ENCODE measurements at regions of chr11 and their contacts with region 1.

Region 1: GRCh38 chr11:56841210-56841810 is 92.8 kb upstream of the OR9G4 start:
- ATAC-seq: peak; percentile 40 to 73 (median 60)
- H3K4me3 ChIP-seq: no peak overlapping the region
- H3K27ac ChIP-seq: no peak overlapping the region
- H3K4me1 ChIP-seq: peaks cover 0 to under 1% of the 10 kb centered on the region in 2 donors

Region 2: GRCh38 chr11:56706486-56706885 is 134.8 kb before region 1 on chr11:
- in situ Hi-C with region 1: no loop called
- ATAC-seq: peak in 1 of 8 experiments; percentile 46
- H3K4me3 ChIP-seq: no peak overlapping the region
- H3K27ac ChIP-seq: no peak overlapping the region
- H3K4me1 ChIP-seq: no peaks in the 10 kb centered on the region

Region 3: GRCh38 chr11:57116654-57117053 is 275.3 kb after region 1 on chr11:
- in situ Hi-C with region 1: loop called in 2 of 9 experiments (anchors 25 kb)
- ATAC-seq: peak in 3 of 8 experiments; percentile 82 to 90 (median 83)
- H3K4me3 ChIP-seq: no peak overlapping the region
- H3K27ac ChIP-seq: no peak overlapping the region
- H3K4me1 ChIP-seq: no peaks in the 10 kb centered on the region

Region 4: DNA sequence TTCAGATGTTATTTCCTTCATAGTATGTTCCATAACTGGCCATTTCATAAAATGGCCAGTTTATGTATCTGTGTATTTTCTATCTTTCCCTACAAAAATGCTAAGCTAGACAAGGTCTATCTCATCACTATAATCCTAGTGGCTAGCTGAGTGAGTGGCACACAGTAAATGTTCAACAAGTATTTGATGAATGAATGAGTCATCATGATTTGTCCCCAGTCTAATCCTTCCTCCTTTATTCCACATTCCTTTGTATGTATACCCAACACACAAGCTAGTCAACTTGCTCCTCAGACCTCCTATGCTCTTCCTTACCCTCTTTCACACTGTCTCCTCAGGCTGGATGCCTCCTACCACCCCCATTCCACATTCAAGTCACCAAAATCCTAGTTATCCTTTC is 383.2 kb after region 1 on chr11:
- in situ Hi-C with region 1: loop called in 2 of 9 experiments (anchors 10 to 25 kb)
- ATAC-seq: peak in 1 of 8 experiments; percentile 33
- H3K4me3 ChIP-seq: no peak overlapping the region
- H3K27ac ChIP-seq: no peak overlapping the region
- H3K4me1 ChIP-seq: peaks cover 3 to 9% of the 10 kb centered on the region in 2 donors